Endothelial cell of umbilical vein (primary cell): ENCODE measurements at regions of chr22 and their contacts with region 1.

Region 1: DNA sequence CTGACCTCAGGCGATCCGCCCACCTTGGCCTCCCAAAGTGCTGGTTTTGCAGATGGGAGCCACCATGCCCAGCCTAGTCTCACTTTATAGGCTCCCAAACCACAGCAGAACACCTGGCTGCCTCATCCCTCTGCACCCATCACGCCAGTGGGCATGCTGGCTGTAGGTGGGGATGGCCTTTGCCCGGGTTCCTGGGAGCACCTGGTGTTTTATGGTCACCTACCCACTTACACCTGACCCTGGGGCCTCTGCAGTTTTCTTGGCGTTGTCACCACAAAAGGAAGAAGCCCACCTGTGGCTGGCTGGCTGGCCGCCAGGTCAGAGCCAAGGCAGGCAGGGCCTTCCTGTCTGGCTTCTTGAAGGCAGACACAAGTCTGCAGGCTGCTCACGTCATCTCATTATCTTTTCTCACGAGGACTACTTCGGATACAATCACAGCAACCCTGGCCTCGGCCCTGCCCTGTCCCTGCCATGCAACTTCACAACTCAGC is 8.2 kb downstream of the RRP7A start:
- DNase-seq: no peak
- H3K4me3 ChIP-seq: no peak overlapping the region
- H3K27ac ChIP-seq: no peak overlapping the region
- H3K4me1 ChIP-seq: no peaks in the 10 kb centered on the region
- H3K27me3 ChIP-seq: no peaks in the 10 kb centered on the region
- CTCF ChIP-seq: no peak
- POLR2A ChIP-seq: no peak

Region 2: DNA sequence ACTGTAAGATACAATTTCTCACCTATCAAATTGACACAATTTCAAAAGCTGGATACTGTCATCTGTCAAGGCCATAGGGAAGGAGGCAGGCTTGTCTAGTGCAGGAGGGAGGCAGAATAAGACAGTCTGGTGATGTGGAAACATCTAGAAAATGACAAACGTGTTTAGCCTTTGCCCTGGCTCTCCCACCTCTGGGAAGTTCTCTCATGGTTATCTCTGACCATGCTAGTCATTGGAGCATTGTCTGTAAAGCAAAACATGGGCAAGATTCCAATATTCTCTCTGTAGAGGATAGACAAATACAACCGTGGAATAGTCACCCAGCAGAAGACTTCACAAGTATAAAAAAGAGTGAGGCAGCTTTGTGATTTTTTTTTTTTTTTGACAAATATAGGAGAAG is 33.2 kb after region 1 on chr22:
- CTCF ChIA-PET with region 1: interaction called, 6 read pairs
- POLR2A ChIA-PET with region 1: interaction called, 12 read pairs
- dilution Hi-C with region 1: no loop called
- intact Hi-C with region 1: no loop called
- DNase-seq: peak; percentile 61
- H3K4me3 ChIP-seq: no peak overlapping the region
- H3K27ac ChIP-seq: no peak overlapping the region
- H3K4me1 ChIP-seq: no peaks in the 10 kb centered on the region
- H3K27me3 ChIP-seq: peaks cover 0 to 9% of the 10 kb centered on the region in 2 experiments
- CTCF ChIP-seq: no peak
- POLR2A ChIP-seq: no peak